GM12878 (cell line): ENCODE measurements at regions of chr6 and their contacts with region 1.

Region 1: GRCh38 chr6:81752138-81752920 is at the start of gene TENT5A:
- DNase-seq: no peak
- ATAC-seq: peak; percentile 93
- H3K4me3 ChIP-seq: peak within 1 kb of the TSS; percentile 61
- H3K27ac ChIP-seq: no peak within 1 kb of the TSS
- H3K4me1 ChIP-seq: no peaks in the 10 kb centered on the region
- H3K27me3 ChIP-seq: peaks cover 0 to 10% of the 10 kb centered on the region in 2 experiments
- CTCF ChIP-seq: no peak
- EP300 ChIP-seq: no peak
- POLR2A ChIP-seq: peak; percentile 58
- RAD21 ChIP-seq: no peak
- polyA plus RNA-seq, gene TENT5A: 0.40 to 0.53 TPM

Region 2: DNA sequence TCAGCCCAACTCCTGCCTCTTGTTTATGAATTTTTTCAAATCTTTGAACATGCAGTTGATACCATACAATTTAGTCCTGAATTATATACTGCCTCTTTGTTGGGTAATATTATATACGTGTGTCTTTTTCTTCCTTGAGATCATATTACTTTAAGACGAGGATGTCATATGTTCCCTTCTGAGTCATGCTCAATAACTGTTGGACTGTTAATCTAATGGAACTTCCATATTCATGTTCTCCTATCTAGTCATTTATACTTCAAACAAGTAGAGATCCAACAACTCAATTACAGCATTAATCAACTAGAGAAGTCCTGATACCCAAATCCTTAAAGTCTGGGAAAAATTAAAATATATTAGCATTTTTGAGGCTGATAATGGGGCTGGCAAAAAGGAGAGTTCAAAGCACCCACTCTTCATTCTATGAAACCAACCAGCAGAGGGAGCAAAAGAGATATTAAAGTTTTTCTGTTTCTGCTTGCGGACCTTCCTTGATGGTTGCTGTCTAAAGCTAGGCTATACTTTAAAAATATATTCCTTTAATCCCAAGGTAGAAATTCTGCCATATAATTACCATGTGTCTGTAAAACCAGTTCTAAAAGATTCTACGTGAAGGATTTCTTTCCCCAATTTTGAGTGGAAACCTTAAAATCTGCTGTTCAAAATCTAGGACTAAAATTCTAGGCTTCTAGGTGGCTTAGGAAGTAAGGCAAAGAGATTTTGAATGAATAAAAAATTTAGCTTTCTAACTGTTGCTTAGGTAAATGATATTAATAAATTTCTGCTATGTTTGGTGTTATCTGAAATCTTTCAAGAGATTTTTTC is 1147.0 kb before region 1 on chr6:
- CTCF ChIA-PET with region 1: interaction called, 7 read pairs
- POLR2A ChIA-PET with region 1: no interaction called
- RAD21 ChIA-PET with region 1: no interaction called
- SMC1A ChIA-PET with region 1: interaction called, 3 read pairs
- in situ Hi-C with region 1: loop called (anchors 10 kb)
- intact Hi-C with region 1: loop called (anchors 10 kb)
- DNase-seq: no peak
- ATAC-seq: peak; percentile 74
- H3K4me3 ChIP-seq: no peak overlapping the region
- H3K27ac ChIP-seq: no peak overlapping the region
- H3K4me1 ChIP-seq: no peaks in the 10 kb centered on the region
- H3K27me3 ChIP-seq: no peaks in the 10 kb centered on the region
- CTCF ChIP-seq: peak; percentile 30 to 52 (median 43); a peak in 4 of 6 replicates
- EP300 ChIP-seq: no peak
- POLR2A ChIP-seq: no peak
- RAD21 ChIP-seq: peak; percentile 51

Region 3: DNA sequence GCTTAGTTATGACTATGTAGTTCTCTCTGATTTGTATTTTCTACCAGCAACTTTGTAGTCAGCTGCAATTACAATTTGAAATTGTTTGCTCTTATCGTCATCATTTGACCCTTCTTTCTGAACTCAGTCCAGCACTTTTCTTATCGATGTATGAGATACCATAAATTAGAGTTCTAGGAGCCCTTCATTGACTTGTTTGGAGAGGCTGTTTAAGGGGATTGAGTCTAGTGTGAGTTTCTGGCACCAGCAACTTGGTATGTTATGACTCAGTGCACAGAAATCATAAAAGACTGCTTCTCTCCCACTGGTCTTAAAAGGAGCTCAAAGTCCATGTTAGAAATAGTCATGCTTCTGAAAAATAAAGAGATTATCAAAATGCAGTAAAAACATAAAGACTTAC is 190.2 kb before region 1 on chr6:
- CTCF ChIA-PET with region 1: no interaction called
- POLR2A ChIA-PET with region 1: no interaction called
- RAD21 ChIA-PET with region 1: interaction called, 14 read pairs
- SMC1A ChIA-PET with region 1: interaction called, 12 read pairs
- in situ Hi-C with region 1: no loop called
- intact Hi-C with region 1: no loop called
- DNase-seq: no peak
- ATAC-seq: no peak
- H3K4me3 ChIP-seq: no peak overlapping the region
- H3K27ac ChIP-seq: no peak overlapping the region
- H3K4me1 ChIP-seq: no peaks in the 10 kb centered on the region
- H3K27me3 ChIP-seq: no peaks in the 10 kb centered on the region
- CTCF ChIP-seq: no peak
- EP300 ChIP-seq: no peak
- POLR2A ChIP-seq: no peak
- RAD21 ChIP-seq: no peak

Region 4: GRCh38 chr6:81636930-81637568 is 115.3 kb before region 1 on chr6:
- CTCF ChIA-PET with region 1: no interaction called
- POLR2A ChIA-PET with region 1: no interaction called
- RAD21 ChIA-PET with region 1: no interaction called
- SMC1A ChIA-PET with region 1: no interaction called
- in situ Hi-C with region 1: no loop called
- intact Hi-C with region 1: no loop called
- DNase-seq: no peak
- ATAC-seq: no peak
- H3K4me3 ChIP-seq: no peak overlapping the region
- H3K27ac ChIP-seq: no peak overlapping the region
- H3K4me1 ChIP-seq: no peaks in the 10 kb centered on the region
- H3K27me3 ChIP-seq: no peaks in the 10 kb centered on the region
- CTCF ChIP-seq: no peak
- EP300 ChIP-seq: no peak
- POLR2A ChIP-seq: no peak
- RAD21 ChIP-seq: no peak

Region 5: DNA sequence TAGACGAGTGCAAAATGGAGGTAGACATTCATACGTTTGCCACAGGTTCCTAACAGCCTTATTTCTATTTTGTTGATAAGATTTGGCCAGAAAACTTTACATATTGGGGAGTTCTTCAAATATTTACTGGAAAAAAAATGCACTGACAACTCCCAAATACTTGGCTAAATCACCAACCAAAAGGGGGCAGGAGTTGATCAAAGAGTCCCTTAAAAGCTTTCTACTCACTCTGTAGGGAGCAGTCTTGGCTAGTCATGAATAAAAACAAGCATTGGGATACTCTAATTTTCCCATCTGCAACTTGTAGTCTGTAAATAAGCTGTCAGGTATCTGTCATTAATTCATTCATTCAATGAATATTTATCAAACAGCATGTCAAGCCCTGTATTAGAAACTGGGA is 18.2 kb before region 1 on chr6:
- CTCF ChIA-PET with region 1: interaction called, 4 read pairs
- POLR2A ChIA-PET with region 1: interaction called, 7 read pairs
- RAD21 ChIA-PET with region 1: interaction called, 15 read pairs
- SMC1A ChIA-PET with region 1: interaction called, 13 read pairs
- in situ Hi-C with region 1: no loop called
- intact Hi-C with region 1: no loop called
- DNase-seq: no peak
- ATAC-seq: no peak
- H3K4me3 ChIP-seq: no peak overlapping the region
- H3K27ac ChIP-seq: no peak overlapping the region
- H3K4me1 ChIP-seq: no peaks in the 10 kb centered on the region
- H3K27me3 ChIP-seq: no peaks in the 10 kb centered on the region
- CTCF ChIP-seq: peak in 1 of 3 experiments; percentile 32; a peak in 1 of 6 replicates
- EP300 ChIP-seq: no peak
- POLR2A ChIP-seq: no peak
- RAD21 ChIP-seq: peak; percentile 36; the same call in 1 of the 2 replicates

Region 6: DNA sequence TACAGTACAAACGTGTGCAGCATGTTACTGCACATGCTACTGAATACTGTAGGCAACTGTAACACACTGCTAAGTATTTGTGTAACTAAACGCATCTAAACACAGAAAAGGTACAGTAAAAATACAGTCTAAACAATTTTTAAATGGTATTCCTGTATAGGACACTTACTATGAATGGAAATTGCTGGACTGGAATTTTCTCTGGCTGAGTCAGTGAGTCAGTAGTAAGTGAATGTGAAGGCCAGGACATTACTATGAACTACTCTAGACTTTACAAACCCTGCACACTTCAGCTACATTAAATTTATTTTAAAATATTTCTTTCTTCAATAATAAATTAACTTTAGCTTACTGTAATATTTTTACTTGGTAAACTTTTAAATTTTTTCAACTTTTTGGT is 225.2 kb after region 1 on chr6:
- CTCF ChIA-PET with region 1: no interaction called
- POLR2A ChIA-PET with region 1: no interaction called
- RAD21 ChIA-PET with region 1: interaction called, 3 read pairs
- SMC1A ChIA-PET with region 1: interaction called, 13 read pairs
- in situ Hi-C with region 1: no loop called
- intact Hi-C with region 1: no loop called
- DNase-seq: no peak
- ATAC-seq: no peak
- H3K4me3 ChIP-seq: no peak overlapping the region
- H3K27ac ChIP-seq: no peak overlapping the region
- H3K4me1 ChIP-seq: no peaks in the 10 kb centered on the region
- H3K27me3 ChIP-seq: no peaks in the 10 kb centered on the region
- CTCF ChIP-seq: no peak
- EP300 ChIP-seq: no peak
- POLR2A ChIP-seq: no peak
- RAD21 ChIP-seq: no peak

Region 7: DNA sequence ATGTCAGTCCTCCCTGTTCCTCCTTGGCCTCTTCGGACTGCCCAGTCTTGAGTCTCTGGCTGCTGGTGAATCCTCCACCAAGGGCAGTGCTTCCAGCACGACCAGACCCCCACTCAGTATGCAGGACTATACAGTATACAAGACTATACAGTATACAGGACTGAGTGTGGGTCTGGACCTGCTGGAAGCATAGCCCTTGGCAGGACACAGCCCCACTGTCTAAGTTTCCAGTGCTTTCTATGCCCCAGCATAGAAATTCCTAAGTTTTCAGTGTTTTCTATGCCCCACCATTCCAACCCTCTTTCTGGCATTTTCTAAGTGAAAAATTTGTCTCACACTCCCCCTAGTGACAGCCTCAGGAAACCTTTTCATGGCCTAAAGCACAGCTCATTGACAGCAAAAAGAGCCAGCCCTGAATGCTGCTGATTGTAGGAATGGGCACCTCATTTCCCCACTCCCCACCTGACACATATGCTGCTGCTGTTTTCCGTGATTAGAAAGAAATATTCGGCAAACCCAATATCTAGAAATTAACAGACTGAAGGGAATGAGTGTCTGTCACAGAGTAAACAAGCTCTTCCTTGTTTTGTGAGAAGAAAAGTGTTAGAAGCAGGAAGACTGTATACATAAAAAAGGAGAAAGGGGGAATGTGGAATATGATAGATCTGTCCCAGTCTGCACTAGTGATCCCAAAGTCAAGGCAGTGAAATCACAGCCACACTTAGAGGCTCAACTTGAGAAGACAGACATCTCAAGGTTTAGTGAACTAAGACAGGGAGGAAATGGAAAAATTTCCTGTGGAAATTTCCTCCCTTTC is 288.3 kb after region 1 on chr6:
- CTCF ChIA-PET with region 1: interaction called, 7 read pairs
- POLR2A ChIA-PET with region 1: no interaction called
- RAD21 ChIA-PET with region 1: interaction called, 15 read pairs
- SMC1A ChIA-PET with region 1: interaction called, 7 read pairs
- in situ Hi-C with region 1: no loop called
- intact Hi-C with region 1: no loop called
- DNase-seq: peak; percentile 7
- ATAC-seq: peak; percentile 87
- H3K4me3 ChIP-seq: no peak overlapping the region
- H3K27ac ChIP-seq: no peak overlapping the region
- H3K4me1 ChIP-seq: no peaks in the 10 kb centered on the region
- H3K27me3 ChIP-seq: no peaks in the 10 kb centered on the region
- CTCF ChIP-seq: peak; percentile 73 to 85 (median 80)
- EP300 ChIP-seq: no peak
- POLR2A ChIP-seq: no peak
- RAD21 ChIP-seq: peak; percentile 74

Region 8: GRCh38 chr6:82097676-82098075 is 345.3 kb after region 1 on chr6:
- CTCF ChIA-PET with region 1: no interaction called
- POLR2A ChIA-PET with region 1: no interaction called
- RAD21 ChIA-PET with region 1: no interaction called
- SMC1A ChIA-PET with region 1: no interaction called
- in situ Hi-C with region 1: no loop called
- intact Hi-C with region 1: no loop called
- DNase-seq: no peak
- ATAC-seq: no peak
- H3K4me3 ChIP-seq: no peak overlapping the region
- H3K27ac ChIP-seq: no peak overlapping the region
- H3K4me1 ChIP-seq: no peaks in the 10 kb centered on the region
- H3K27me3 ChIP-seq: no peaks in the 10 kb centered on the region
- CTCF ChIP-seq: no peak
- EP300 ChIP-seq: no peak
- POLR2A ChIP-seq: no peak
- RAD21 ChIP-seq: no peak